HCT116 (cell line): ENCODE measurements at regions of chr19 and their contacts with region 1.

Region 1: GRCh38 chr19:18251587-18252369 is 22.5 kb downstream of the IQCN start:
- DNase-seq: peak; percentile 74
- ATAC-seq: peak; percentile 84
- H3K4me3 ChIP-seq: no peak overlapping the region
- H3K27ac ChIP-seq: no peak overlapping the region
- H3K4me1 ChIP-seq: peaks cover 0 to 28% of the 10 kb centered on the region in 2 experiments; a peak in 2 of 4 replicates
- H3K27me3 ChIP-seq: no peaks in the 10 kb centered on the region
- CTCF ChIP-seq: peak; percentile 91 to 99 (median 92)
- POLR2A ChIP-seq: no peak
- RAD21 ChIP-seq: peak; percentile 99

Region 2: GRCh38 chr19:18007044-18007916 is 244.5 kb before region 1 on chr19:
- CTCF ChIA-PET with region 1: interaction called, 3 read pairs
- POLR2A ChIA-PET with region 1: no interaction called
- RAD21 ChIA-PET with region 1: no interaction called
- intact Hi-C with region 1: loop called (anchors 1 kb)
- DNase-seq: no peak
- ATAC-seq: peak; percentile 95
- H3K4me3 ChIP-seq: no peak overlapping the region
- H3K27ac ChIP-seq: peak overlapping the region; percentile 53; the same call in 1 of the 2 replicates
- H3K4me1 ChIP-seq: peaks cover 2 to 17% of the 10 kb centered on the region in 2 experiments; a peak in 3 of 4 replicates
- H3K27me3 ChIP-seq: no peaks in the 10 kb centered on the region
- CTCF ChIP-seq: peak; percentile 86 to 97 (median 95)
- POLR2A ChIP-seq: no peak
- RAD21 ChIP-seq: peak; percentile 97

Region 3: DNA sequence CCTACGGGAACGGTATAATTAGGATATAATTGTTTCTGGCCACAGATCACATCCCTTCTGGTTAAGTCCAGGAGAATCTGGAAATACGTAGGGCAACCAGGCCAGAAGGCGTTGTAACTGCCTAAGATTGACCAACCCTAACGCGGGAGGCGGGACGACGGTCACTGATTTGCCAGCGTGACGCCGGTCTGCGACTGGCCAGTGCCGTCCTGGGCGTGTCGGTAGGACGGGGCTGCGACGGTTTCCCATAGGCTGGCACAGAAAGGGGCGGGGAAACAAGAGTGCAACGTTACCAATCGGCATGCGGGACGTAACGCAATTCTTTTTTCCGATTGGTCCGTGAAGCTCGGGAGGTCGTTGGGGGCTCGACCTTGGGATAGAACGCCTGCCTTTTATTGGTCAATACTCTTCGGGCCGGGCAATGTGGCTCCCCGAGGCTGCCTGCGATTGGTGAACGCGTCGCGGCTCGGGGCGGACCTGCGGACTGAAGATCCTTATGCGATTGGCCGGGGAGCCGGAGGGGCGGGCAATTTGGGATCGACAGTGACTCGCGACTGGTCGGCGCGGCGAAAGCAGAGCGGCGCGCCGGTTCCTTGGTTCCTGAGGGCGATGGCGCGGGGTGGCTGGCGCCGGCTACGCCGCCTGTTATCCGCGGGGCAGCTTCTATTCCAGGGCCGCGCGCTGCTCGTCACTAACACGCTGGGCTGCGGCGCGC is 58.9 kb before region 1 on chr19 and contains the start of gene MPV17L2:
- CTCF ChIA-PET with region 1: interaction called, 12 read pairs
- POLR2A ChIA-PET with region 1: interaction called, 3 read pairs
- RAD21 ChIA-PET with region 1: interaction called in 1 of 2 experiments, 3 read pairs
- intact Hi-C with region 1: no loop called
- DNase-seq: peak; percentile 100
- ATAC-seq: peak; percentile 88
- H3K4me3 ChIP-seq: peak within 1 kb of the TSS; percentile 90 to 93
- H3K27ac ChIP-seq: peak within 1 kb of the TSS; percentile 77
- H3K4me1 ChIP-seq: peaks cover 14 to 26% of the 10 kb centered on the region in 2 experiments
- H3K27me3 ChIP-seq: no peaks in the 10 kb centered on the region
- CTCF ChIP-seq: no peak
- POLR2A ChIP-seq: peak; percentile 92
- RAD21 ChIP-seq: no peak
- total RNA-seq, gene MPV17L2: 18.7 TPM

Region 4: GRCh38 chr19:18224525-18225354 is 27.0 kb before region 1 on chr19:
- CTCF ChIA-PET with region 1: interaction called, 17 read pairs
- POLR2A ChIA-PET with region 1: no interaction called
- RAD21 ChIA-PET with region 1: interaction called in 1 of 2 experiments, 6 read pairs
- intact Hi-C with region 1: no loop called
- DNase-seq: peak; percentile 99
- ATAC-seq: peak; percentile 98
- H3K4me3 ChIP-seq: peak overlapping the region; percentile 45 to 56
- H3K27ac ChIP-seq: peak overlapping the region; percentile 72
- H3K4me1 ChIP-seq: peaks cover 18 to 30% of the 10 kb centered on the region in 2 experiments
- H3K27me3 ChIP-seq: no peaks in the 10 kb centered on the region
- CTCF ChIP-seq: no peak
- POLR2A ChIP-seq: no peak
- RAD21 ChIP-seq: no peak

Region 5: DNA sequence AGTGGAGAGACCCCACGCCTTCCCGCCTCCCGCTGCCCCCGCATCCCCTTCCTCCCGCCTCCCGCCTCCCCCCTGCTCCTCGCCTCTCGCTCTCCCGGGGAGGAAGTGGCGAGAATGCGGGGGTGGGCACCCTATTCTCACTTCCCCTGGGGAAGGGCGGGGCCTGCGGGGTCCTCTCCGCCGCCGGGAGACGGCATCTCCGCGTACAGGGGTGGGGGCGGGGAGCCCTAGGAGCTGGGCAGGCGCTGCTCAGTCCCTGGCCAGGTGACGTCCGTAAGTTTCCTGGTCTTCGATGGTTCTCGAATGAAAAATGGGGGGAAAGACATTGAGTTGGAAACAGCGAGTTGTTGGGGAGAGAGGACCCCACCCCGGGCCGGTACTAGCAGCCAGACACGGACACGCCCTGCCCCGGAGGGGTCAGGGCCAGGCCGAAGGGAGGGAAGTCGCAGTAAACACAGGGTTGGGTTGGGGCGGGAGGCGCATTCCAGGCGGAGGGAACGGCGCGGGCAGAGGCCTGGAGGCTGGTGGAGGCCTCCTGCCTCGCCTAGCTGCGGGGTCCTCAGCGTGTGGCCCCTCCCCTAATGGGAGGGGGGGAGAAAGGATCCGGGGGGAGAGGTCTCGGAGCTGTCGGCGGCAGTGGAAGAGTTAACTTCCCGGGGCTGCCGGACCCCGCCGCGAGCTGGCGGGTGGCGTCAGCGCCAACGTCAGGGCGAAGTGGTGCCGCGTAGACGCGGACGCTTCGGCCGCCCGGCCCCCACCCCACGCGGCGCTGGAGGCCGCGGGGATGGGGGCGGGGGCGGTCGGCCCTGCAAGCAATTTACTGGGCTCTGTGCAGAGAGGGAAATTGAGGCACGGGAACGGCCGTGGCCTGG is 40.0 kb after region 1 on chr19:
- CTCF ChIA-PET with region 1: no interaction called
- POLR2A ChIA-PET with region 1: no interaction called
- RAD21 ChIA-PET with region 1: no interaction called
- intact Hi-C with region 1: no loop called
- DNase-seq: no peak
- ATAC-seq: peak; percentile 65
- H3K4me3 ChIP-seq: peak overlapping the region; percentile 49 to 74
- H3K27ac ChIP-seq: peak overlapping the region; percentile 94
- H3K4me1 ChIP-seq: peaks cover 28 to 55% of the 10 kb centered on the region in 2 experiments
- H3K27me3 ChIP-seq: no peaks in the 10 kb centered on the region
- CTCF ChIP-seq: no peak
- POLR2A ChIP-seq: peak; percentile 2
- RAD21 ChIP-seq: no peak